WTC11 (cell line): ENCODE measurements at regions of chr1 and their contacts with region 1.

Region 1: DNA sequence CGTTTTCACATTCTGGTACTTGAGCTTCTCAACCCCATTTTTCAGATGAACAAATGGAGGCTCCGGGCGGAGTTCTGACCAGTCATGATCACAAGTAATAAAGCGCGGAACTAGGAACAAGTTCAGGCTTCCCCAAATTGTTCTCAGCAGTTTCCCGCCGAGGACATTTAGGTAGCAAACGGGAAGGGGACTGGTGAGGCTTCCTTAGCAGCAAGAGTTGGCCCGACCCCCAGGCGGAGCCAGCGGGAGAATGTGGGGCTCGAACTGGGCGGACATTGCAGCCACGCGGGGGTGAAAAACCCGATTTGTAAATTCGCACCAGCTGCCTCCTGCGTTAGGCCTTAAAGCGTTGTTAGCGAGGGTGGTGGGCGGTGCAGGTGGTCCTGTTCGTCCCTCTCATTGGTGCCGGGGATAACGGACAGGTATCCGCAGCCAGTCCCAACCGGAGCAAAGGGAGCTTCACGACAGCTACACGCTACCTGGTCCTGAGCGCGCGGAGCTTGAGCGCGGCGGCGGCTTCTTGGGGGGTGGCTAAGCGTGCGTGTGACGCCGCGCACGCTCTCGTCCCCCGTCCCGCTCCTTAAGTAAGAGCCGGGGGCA is 15.3 kb downstream of the SEMA6C start:
- DNase-seq: peak; percentile 96
- ATAC-seq: peak; percentile 93
- H3K4me3 Mint-ChIP-seq: peak overlapping the region; percentile 72
- H3K27ac Mint-ChIP-seq: peak overlapping the region; percentile 83
- H3K4me1 Mint-ChIP-seq: peaks cover 15% of the 10 kb centered on the region
- H3K27me3 Mint-ChIP-seq: peaks cover 43% of the 10 kb centered on the region
- CTCF ChIP-seq: no peak

Region 2: DNA sequence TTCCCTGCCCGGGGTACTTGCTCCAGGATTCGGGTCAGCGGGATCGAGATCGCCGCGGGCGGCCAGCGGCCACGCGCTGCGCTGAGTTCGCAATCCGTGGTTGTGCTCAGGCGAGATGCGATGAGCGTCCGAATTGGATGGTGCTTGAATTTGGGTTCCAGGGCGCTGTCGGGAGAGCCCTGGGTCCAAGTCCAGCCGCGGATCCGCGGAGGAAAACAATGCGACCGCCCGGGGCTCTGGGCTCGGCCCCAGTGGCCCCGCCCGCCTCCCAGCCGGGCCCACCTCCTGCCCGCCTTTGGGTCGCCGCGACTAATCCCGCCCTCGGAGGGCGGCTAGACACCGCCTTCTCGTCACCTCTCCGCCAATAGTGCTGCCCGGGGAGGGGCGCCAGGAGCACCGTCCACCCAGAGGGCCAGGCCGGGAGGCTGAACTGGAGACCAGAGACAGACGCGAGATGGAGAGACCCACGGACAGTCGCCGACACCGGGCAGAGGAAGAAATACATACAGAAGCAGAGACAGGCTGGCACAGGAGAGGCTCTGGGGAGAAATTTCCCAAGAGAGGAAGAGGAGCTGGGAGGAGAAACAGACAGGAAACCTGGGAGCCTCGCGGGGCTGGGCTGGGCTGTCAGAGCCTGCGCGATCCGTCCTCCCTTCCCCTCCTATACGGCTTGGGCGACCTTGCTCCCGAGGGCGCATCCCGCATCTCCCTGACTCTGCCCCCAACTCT is 15.5 kb after region 1 on chr1 and contains the start of gene SEMA6C:
- CTCF ChIA-PET with region 1: interaction called, 30 read pairs
- POLR2A ChIA-PET with region 1: interaction called, 11 read pairs
- DNase-seq: peak; percentile 94
- ATAC-seq: peak; percentile 92
- H3K4me3 Mint-ChIP-seq: peak within 1 kb of the TSS; percentile 93
- H3K27ac Mint-ChIP-seq: no peak within 1 kb of the TSS
- H3K4me1 Mint-ChIP-seq: peaks cover 38% of the 10 kb centered on the region
- H3K27me3 Mint-ChIP-seq: peaks cover 44% of the 10 kb centered on the region
- CTCF ChIP-seq: no peak
- total RNA-seq, gene SEMA6C: 16.3 to 21.0 TPM (median 18.1 TPM) in 3 replicates